ENCODE measurements at regions of chr12 and their contacts with region 1.

Region 1: GRCh38 chr12:120649442-120650232 is 9.2 kb downstream of the CABP1 start:
- DNase-seq: peak; percentile 78
- H3K4me3 ChIP-seq: peak overlapping the region; percentile 44 to 66; a peak in 3 of 4 replicates
- H3K27ac ChIP-seq: no peak overlapping the region
- H3K4me1 ChIP-seq: peaks cover 0 to 14% of the 10 kb centered on the region in 2 experiments; a peak in 1 of 4 replicates
- H3K27me3 ChIP-seq: peaks cover 10% of the 10 kb centered on the region; the same call in 1 of the 2 replicates
- CTCF ChIP-seq: no peak
- EP300 ChIP-seq: no peak
- RAD21 ChIP-seq: no peak

Region 2: GRCh38 chr12:120625557-120626419 is 23.8 kb before region 1 on chr12:
- CTCF ChIA-PET with region 1: interaction called, 94 read pairs
- POLR2A ChIA-PET with region 1: no interaction called
- DNase-seq: peak; percentile 55
- H3K4me3 ChIP-seq: no peak overlapping the region
- H3K27ac ChIP-seq: no peak overlapping the region
- H3K4me1 ChIP-seq: peaks cover 0 to 11% of the 10 kb centered on the region in 2 experiments; a peak in 1 of 4 replicates
- H3K27me3 ChIP-seq: no peaks in the 10 kb centered on the region
- CTCF ChIP-seq: peak; percentile 31; the same call in 1 of the 2 replicates
- EP300 ChIP-seq: no peak
- RAD21 ChIP-seq: 0 out of 2 replicates have a peak, but pooled peaks have one; percentile 22

Region 3: GRCh38 chr12:120669055-120669840 is 19.6 kb after region 1 on chr12:
- CTCF ChIA-PET with region 1: interaction called, 28 read pairs
- POLR2A ChIA-PET with region 1: interaction called, 3 read pairs
- DNase-seq: peak; percentile 83
- H3K4me3 ChIP-seq: no peak overlapping the region
- H3K27ac ChIP-seq: peak overlapping the region in 1 of 2 experiments; percentile 31; a peak in 1 of 4 replicates
- H3K4me1 ChIP-seq: peaks cover 0 to 15% of the 10 kb centered on the region in 2 experiments; a peak in 2 of 4 replicates
- H3K27me3 ChIP-seq: no peaks in the 10 kb centered on the region
- CTCF ChIP-seq: no peak
- EP300 ChIP-seq: no peak
- RAD21 ChIP-seq: no peak

Region 4: GRCh38 chr12:120700886-120701285 is 51.2 kb after region 1 on chr12:
- CTCF ChIA-PET with region 1: interaction called, 10 read pairs
- POLR2A ChIA-PET with region 1: no interaction called
- DNase-seq: no peak
- H3K4me3 ChIP-seq: no peak overlapping the region
- H3K27ac ChIP-seq: no peak overlapping the region; a peak in 1 of 4 replicates
- H3K4me1 ChIP-seq: no peaks in the 10 kb centered on the region; a peak in 1 of 4 replicates
- H3K27me3 ChIP-seq: no peaks in the 10 kb centered on the region
- CTCF ChIP-seq: no peak
- EP300 ChIP-seq: no peak
- RAD21 ChIP-seq: no peak

Region 5: GRCh38 chr12:120720234-120720986 is 70.8 kb after region 1 on chr12:
- CTCF ChIA-PET with region 1: interaction called, 36 read pairs
- POLR2A ChIA-PET with region 1: no interaction called
- DNase-seq: no peak
- H3K4me3 ChIP-seq: no peak overlapping the region
- H3K27ac ChIP-seq: peak overlapping the region; percentile 50 to 73
- H3K4me1 ChIP-seq: peaks cover 5 to 33% of the 10 kb centered on the region in 2 experiments; a peak in 3 of 4 replicates
- H3K27me3 ChIP-seq: no peaks in the 10 kb centered on the region
- CTCF ChIP-seq: no peak
- EP300 ChIP-seq: no peak
- RAD21 ChIP-seq: no peak

Region 6: DNA sequence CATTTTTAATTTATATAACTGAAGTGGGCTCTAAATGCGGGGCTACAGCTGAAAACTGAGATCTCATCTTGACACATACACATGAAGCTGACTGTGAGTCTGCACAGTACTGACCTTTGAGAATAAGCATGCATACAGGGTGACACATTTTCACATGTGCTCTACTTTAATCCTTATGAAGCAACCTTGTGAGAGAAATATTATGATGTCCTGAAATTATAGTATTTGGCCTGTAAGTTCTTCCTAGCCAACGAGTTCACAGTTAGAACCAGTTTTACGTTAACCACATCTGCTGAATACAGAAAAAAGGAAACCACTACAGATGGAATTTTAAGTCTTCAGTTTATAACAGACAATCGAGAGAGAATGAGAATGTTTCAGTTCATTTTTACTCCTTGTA is 184.2 kb after region 1 on chr12:
- CTCF ChIA-PET with region 1: no interaction called
- POLR2A ChIA-PET with region 1: no interaction called
- DNase-seq: no peak
- H3K4me3 ChIP-seq: no peak overlapping the region
- H3K27ac ChIP-seq: no peak overlapping the region
- H3K4me1 ChIP-seq: peaks cover 0 to 9% of the 10 kb centered on the region in 2 experiments; a peak in 3 of 4 replicates
- H3K27me3 ChIP-seq: no peaks in the 10 kb centered on the region
- CTCF ChIP-seq: no peak
- EP300 ChIP-seq: no peak
- RAD21 ChIP-seq: no peak

Region 7: DNA sequence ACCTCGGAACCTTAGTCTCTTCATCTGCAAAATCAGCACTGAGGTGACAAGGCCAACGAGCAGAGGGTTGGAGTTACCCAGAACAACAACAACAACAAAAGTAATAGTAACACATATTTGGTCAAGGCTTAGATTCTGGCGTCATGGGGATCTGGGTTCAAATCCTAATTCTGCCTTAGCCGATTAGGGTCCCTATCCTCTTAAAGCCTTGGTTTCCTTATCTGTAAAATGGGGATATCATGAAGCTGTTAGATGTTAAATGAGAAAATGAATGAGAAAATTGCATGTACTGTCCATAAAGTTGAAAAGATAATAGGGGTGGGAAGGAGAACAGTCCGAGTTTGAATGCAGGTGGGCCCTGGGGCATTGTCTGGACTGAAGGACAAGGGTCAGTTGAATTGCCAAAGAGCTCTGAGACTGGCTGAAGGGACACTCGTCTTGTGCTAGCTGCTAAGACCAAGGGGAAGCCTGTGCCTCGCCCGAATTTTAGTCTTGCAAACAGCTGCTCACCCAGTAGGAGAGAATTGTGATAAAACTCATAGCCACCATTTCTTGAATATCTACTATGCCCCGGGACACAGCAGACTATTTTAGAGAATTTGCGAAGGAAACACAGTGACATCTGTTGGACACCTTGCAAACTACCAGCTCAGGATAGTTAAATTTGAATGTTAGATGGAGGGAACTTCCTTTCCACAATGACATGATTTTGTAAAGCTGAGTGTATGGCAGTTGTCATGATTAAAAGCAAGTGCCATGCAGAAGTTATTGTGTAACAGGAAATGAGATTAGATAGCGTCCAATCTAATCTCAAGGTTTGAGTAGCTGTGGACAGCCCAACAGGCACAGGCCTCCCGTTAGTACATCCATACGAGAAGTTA is 321.9 kb after region 1 on chr12:
- CTCF ChIA-PET with region 1: interaction called, 101 read pairs
- POLR2A ChIA-PET with region 1: interaction called, 3 read pairs
- DNase-seq: peak; percentile 78
- H3K4me3 ChIP-seq: no peak overlapping the region
- H3K27ac ChIP-seq: no peak overlapping the region
- H3K4me1 ChIP-seq: peaks cover 0 to 2% of the 10 kb centered on the region in 2 experiments; a peak in 1 of 4 replicates
- H3K27me3 ChIP-seq: no peaks in the 10 kb centered on the region; the same call in 1 of the 2 replicates
- CTCF ChIP-seq: peak; percentile 78
- EP300 ChIP-seq: peak in 1 of 2 experiments; percentile 17; a peak in 1 of 4 replicates
- RAD21 ChIP-seq: peak; percentile 91

Measured in SK-N-SH (cell line).